Cardiac septum (tissue), 1 donor: ENCODE measurements at regions of chr22 and their contacts with region 1.

Region 1: DNA sequence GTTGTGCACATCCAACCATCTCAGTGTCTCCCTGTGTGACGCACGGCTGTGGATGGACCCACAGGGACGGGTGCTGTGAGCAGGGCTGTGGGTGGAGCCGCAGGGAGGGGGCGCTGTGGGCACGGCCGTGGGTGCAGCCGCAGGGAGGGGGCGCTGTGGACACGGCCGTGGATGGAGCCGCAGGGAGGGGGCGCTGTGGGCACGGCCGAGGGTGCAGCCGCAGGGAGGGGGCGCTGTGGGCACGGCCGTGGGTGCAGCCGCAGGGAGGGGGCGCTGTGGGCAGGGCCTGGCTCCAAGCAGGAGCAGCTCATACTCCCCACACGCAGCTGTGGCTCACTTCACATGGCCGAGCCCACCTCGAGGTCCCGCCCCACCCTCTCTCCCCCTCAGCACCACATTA is 6.0 kb upstream of the MAPK11 start:
- DNase-seq: peak; percentile 87

Region 2: DNA sequence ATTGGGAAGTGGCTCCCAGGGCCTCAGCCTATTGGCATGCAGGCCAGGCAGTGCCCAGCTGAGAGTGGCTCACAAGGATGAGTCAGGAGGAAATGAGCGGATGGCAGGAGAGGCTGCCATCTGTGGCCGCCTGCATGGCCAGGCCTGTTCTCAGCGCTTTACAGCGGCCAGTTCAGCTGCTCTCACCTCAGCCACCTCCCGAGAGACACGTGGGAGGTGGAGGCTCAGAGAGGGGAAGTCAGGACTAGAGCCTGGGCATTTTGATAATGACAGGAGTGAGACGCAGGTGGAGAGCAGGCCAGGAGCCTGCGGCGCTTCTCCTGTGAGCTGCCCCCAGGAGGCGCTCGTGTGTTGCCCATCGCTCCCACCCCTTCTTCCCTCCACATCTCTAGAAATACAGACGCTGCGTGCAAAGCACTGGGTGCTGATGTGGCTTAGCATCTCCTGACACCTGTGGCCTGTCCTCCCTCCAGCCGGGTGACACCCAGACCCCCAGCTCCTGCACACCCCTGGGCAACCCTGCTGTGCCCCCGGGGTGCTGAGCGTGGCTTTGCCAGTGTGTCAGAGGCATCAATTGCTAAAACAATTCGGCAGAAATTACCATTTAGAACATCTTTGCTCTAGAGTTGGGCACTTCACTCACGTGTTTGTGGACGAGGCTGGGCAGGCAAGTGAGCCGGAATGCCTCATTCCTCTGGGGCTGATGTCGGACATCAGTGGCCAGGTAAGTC is 127.0 kb before region 1 on chr22:
- intact Hi-C with region 1: no loop called
- DNase-seq: peak; percentile 85

Region 3: GRCh38 chr22:50306753-50307749 is 30.9 kb after region 1 on chr22 and contains the start of gene PLXNB2:
- intact Hi-C with region 1: loop called (anchors 5 kb)
- DNase-seq: peak; percentile 88
- total RNA-seq, gene PLXNB2: 85.7 TPM

Region 4: GRCh38 chr22:50326959-50327710 is 51.0 kb after region 1 on chr22 and contains the start of gene DENND6B:
- intact Hi-C with region 1: loop called (anchors 1 kb)
- DNase-seq: peak; percentile 92
- total RNA-seq, gene DENND6B: 2.8 TPM

Region 5: DNA sequence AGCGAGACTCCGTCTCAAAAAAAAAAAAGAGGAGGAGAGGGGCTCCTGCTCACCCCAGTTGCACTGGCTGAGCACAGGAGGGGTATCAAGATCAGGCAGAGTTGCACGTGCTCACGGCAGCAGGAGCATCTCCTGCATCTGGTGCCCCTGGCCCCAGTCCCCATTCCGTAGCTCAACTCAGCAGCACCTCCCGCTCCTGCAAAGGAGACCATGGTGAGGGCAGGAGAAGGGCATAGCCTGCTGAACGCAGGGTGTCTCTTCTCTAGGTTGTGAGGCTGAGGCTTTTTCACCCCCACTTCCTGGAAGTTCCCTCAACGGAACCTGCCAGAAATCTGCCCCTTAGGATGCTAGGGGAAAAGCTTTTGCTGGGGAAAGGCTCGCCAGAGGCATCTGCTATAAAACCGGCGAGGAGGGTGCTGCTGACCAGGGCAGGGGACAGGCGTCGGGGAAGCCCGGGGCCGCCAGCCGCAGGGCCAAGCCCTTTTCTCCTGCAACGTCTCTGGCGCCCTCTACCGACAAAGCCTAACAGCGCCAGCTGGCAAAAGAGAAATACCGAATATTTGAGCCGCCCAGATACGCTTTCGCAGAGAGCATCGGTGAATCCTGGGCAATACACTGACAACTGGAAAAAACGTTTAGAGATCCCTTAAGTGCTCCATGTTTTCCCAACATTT is 66.0 kb after region 1 on chr22:
- intact Hi-C with region 1: loop called (anchors 1 kb)
- DNase-seq: peak; percentile 92